Activated T-helper 2 cell treated with anti-CD3 and anti-CD28 coated beads, Interferon-gamma antibody, Interleukin-2, Interleukin-4, amounts not matched to agents 10 μg/mL and 5 μg/mL and 100 μg/mL, durations not matched to agents 14 hours and 24 hours and 36 hours (primary cell): ENCODE measurements at regions of chrX and their contacts with region 1.

Region 1: DNA sequence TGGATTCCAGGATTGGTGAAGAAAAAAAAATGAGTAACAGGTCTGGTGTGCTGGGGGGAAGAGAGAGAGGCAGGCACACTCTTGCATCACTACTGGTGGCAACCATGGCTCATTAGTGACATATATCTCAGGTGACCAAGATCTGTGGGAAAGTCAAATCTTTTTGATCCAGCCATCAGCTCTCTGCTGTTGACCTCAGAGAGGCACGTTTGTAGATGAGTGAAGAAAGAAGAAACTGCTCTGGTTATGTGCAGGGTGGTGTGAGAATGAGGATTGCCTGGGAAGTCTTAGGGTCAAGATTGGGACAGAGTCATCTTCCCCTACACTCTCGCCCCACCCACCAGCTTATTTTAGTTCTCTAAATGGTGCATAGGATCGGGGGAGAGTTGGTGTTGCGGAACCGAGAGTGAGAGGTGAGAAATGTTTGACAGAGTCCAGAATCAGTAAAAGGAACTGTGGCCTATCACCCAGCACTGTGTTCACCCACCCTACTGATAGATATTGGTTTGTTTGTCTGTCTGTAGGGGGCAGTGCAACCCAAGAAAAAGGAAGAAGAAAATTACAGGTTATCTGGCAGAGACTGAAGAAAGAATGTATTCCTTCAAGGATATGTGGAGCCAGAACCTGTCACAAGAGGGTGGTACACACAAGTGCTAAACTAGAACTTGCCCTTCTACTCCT is 21.9 kb downstream of the ARMCX6 start:
- DNase-seq: no peak
- H3K4me3 Mint-ChIP-seq: no peak overlapping the region
- H3K27ac Mint-ChIP-seq: no peak overlapping the region
- H3K4me1 Mint-ChIP-seq: no peaks in the 10 kb centered on the region
- H3K27me3 Mint-ChIP-seq: peaks cover 8% of the 10 kb centered on the region

Region 2: GRCh38 chrX:101430457-101431078 is 165.3 kb before region 1 on chrX:
- intact Hi-C with region 1: no loop called
- DNase-seq: no peak
- H3K4me3 Mint-ChIP-seq: peak overlapping the region; percentile 28
- H3K27ac Mint-ChIP-seq: peak overlapping the region; percentile 86
- H3K4me1 Mint-ChIP-seq: peaks cover 15% of the 10 kb centered on the region
- H3K27me3 Mint-ChIP-seq: no peaks in the 10 kb centered on the region

Region 3: GRCh38 chrX:101759000-101759399 is 163.1 kb after region 1 on chrX:
- intact Hi-C with region 1: loop called (anchors 5 kb)
- DNase-seq: peak; percentile 8
- H3K4me3 Mint-ChIP-seq: no peak overlapping the region
- H3K27ac Mint-ChIP-seq: no peak overlapping the region
- H3K4me1 Mint-ChIP-seq: peaks cover 4% of the 10 kb centered on the region
- H3K27me3 Mint-ChIP-seq: no peaks in the 10 kb centered on the region

Region 4: DNA sequence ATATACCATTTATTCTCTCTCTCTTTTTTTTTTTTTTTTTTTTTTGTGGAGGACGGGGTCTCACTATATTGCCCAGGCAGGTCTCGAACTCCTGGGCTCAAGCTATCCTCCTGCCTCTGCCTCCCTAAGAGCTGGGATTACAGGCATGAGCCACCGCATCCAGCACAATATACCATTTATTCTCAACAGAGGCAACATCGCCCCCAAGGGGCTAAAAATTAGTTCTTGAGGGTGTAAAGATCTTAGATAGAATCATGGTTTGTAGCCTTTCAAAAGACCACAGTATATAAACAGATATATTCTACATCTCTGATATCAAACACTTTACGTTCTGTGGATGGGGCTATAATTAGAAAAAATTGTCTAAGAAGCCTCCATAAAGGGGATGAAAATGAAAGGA is 489.8 kb after region 1 on chrX:
- intact Hi-C with region 1: loop called (anchors 5 kb)
- DNase-seq: no peak
- H3K4me3 Mint-ChIP-seq: no peak overlapping the region
- H3K27ac Mint-ChIP-seq: no peak overlapping the region
- H3K4me1 Mint-ChIP-seq: no peaks in the 10 kb centered on the region
- H3K27me3 Mint-ChIP-seq: no peaks in the 10 kb centered on the region